Activated CD8-positive, alpha-beta memory T cell treated with anti-CD3 and anti-CD28 coated beads, Interleukin-2, amount 10 ng/mL, durations not matched to agents 7 days and 5 days (primary cell): ENCODE measurements at regions of chr16 and their contacts with region 1.

Region 1: GRCh38 chr16:27367461-27368357 is 34.3 kb upstream of the IL21R start:
- DNase-seq: peak; percentile 92
- ATAC-seq: peak; percentile 83
- H3K4me3 Mint-ChIP-seq: peak overlapping the region; percentile 49
- H3K27ac Mint-ChIP-seq: peak overlapping the region; percentile 95
- H3K4me1 Mint-ChIP-seq: peaks cover 36% of the 10 kb centered on the region
- H3K27me3 Mint-ChIP-seq: no peaks in the 10 kb centered on the region

Region 2: DNA sequence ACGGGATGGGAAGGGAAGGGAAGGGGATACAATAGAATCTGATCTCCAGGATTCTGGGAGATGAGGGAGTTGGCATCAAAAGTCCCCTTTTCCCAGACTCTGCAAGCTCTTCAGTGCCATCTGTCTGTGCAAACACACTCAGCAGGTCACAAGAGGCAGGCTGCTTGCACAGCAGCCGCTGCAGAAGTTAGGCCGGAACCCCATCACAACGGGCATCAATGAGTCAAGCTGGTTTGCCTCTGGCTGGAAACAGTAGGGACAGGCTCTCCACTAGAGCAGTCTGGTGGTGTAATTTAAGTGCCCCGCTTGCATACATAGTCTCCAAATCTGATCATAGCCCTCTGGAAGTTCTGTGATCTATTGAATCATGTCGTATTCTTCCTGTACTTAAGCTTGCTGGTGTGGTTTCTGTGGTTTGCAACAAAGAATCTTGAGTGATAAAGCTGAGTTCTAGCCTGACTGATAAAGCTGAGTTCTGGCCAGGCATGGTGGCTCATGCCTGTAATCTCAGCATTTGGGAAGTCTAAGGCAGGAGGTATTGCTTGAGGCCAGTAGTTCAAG is 198.1 kb before region 1 on chr16:
- CTCF ChIA-PET with region 1: interaction called, 15 read pairs
- DNase-seq: peak; percentile 87
- ATAC-seq: peak; percentile 86
- H3K4me3 Mint-ChIP-seq: peak overlapping the region; percentile 59
- H3K27ac Mint-ChIP-seq: peak overlapping the region; percentile 82
- H3K4me1 Mint-ChIP-seq: peaks cover 45% of the 10 kb centered on the region
- H3K27me3 Mint-ChIP-seq: no peaks in the 10 kb centered on the region

Region 3: GRCh38 chr16:27203429-27204231 is 164.1 kb before region 1 on chr16 and contains the start of gene KDM8:
- CTCF ChIA-PET with region 1: interaction called, 12 read pairs
- DNase-seq: peak; percentile 100
- ATAC-seq: peak; percentile 94
- H3K4me3 Mint-ChIP-seq: peak within 1 kb of the TSS; percentile 95
- H3K27ac Mint-ChIP-seq: peak within 1 kb of the TSS; percentile 100
- H3K4me1 Mint-ChIP-seq: peaks cover 48% of the 10 kb centered on the region
- H3K27me3 Mint-ChIP-seq: no peaks in the 10 kb centered on the region
- total RNA-seq, gene KDM8: 14.8 to 18.2 TPM

Region 4: GRCh38 chr16:27286451-27286850 is 81.3 kb before region 1 on chr16:
- CTCF ChIA-PET with region 1: no interaction called
- DNase-seq: no peak
- ATAC-seq: no peak
- H3K4me3 Mint-ChIP-seq: no peak overlapping the region
- H3K27ac Mint-ChIP-seq: no peak overlapping the region
- H3K4me1 Mint-ChIP-seq: peaks cover 54% of the 10 kb centered on the region
- H3K27me3 Mint-ChIP-seq: no peaks in the 10 kb centered on the region

Region 5: GRCh38 chr16:27314161-27314723 is 53.5 kb before region 1 on chr16:
- CTCF ChIA-PET with region 1: interaction called, 38 read pairs
- DNase-seq: peak; percentile 85
- ATAC-seq: peak; percentile 37
- H3K4me3 Mint-ChIP-seq: peak overlapping the region; percentile 94
- H3K27ac Mint-ChIP-seq: peak overlapping the region; percentile 94
- H3K4me1 Mint-ChIP-seq: peaks cover 48% of the 10 kb centered on the region
- H3K27me3 Mint-ChIP-seq: no peaks in the 10 kb centered on the region

Region 6: DNA sequence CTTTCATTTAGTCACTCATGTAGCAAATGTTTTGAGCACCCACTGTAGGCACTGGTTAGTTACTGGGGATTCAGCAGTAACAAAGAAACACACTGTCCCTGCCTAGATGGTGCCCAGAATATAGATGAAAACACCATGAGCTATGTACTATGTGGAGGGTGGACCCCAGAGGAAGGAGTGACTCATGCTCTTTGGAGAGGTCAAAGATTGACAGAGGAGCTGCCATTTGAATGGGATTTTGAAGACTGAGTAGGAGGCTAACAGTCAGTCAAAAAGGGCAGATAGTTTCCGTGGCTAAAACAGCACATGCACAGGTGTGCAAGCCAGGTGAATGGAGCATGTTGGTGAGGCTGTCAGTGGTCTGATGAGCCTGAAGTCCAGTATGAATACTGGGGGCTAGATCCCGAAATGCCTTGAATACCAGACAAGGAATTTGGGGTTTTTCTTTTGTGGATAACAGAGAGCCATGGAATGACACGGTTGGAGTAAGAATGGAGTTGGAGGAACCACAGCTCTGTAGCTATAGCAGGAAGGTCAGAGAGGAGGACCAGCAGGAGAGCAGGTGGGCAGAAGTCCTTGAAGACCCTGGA is 40.4 kb after region 1 on chr16:
- CTCF ChIA-PET with region 1: interaction called, 10 read pairs
- DNase-seq: peak; percentile 65
- ATAC-seq: peak; percentile 55
- H3K4me3 Mint-ChIP-seq: peak overlapping the region; percentile 67
- H3K27ac Mint-ChIP-seq: peak overlapping the region; percentile 89
- H3K4me1 Mint-ChIP-seq: peaks cover 78% of the 10 kb centered on the region
- H3K27me3 Mint-ChIP-seq: no peaks in the 10 kb centered on the region